ENCODE measurements at regions of chr13 and their contacts with region 1.

Region 1: GRCh38 chr13:98142380-98143156 is at the start of gene FARP1:
- DNase-seq: peak; percentile 62
- ATAC-seq: peak; percentile 89
- H3K4me3 ChIP-seq: peak within 1 kb of the TSS; percentile 82 to 98 (median 92)
- H3K27ac ChIP-seq: peak within 1 kb of the TSS; percentile 88
- H3K4me1 ChIP-seq: peaks cover 36% of the 10 kb centered on the region
- H3K27me3 ChIP-seq: no peaks in the 10 kb centered on the region; a peak in 1 of 5 replicates
- CTCF ChIP-seq: peak; percentile 44; the same call in 1 of the 2 replicates
- EP300 ChIP-seq: peak in 1 of 2 experiments; percentile 4; a peak in 1 of 4 replicates
- POLR2A ChIP-seq: peak; percentile 40 to 56; a peak in 3 of 4 replicates
- RAD21 ChIP-seq: peak; percentile 99
- total RNA-seq, gene FARP1: 70.1 and 70.6 TPM in 2 replicates

Region 2: DNA sequence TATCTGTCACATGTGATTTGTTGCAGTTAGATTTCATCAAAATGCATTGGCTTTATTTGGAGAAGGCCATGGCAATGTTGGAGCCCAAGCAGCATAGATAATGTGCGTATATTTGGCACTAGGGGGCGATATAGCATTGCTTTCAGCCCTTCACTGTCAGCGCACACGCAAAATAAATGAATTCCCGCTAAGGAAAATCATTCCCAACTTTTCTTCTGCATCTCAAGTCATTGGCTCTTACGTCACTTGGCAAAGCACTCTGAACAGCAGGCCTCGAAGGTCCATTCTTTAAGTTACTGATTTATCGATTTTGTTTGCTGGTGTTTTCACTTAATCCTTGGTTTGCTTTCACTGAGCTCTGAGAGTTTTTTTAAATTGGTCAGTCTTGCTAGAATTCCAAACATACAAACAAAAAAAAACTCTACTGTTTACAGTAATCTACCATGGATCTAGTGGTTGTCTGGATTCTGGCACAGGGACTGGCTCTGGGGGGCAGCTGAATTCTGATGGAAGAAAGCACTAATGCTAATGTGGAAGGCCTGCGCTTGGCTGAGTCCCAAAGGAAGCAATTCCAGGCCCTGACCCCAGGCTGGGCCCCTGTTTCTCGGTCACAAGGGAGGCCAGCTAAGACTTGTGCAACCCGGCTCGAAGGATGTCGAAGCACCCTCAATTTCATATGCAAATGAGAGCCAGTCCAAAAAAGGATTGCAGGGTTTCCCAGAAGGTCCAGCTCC is 286.8 kb before region 1 on chr13:
- CTCF ChIA-PET with region 1: no interaction called
- POLR2A ChIA-PET with region 1: no interaction called
- in situ Hi-C with region 1: no loop called
- intact Hi-C with region 1: loop called (anchors 10 kb)
- DNase-seq: peak; percentile 55
- ATAC-seq: peak; percentile 94
- H3K4me3 ChIP-seq: peak overlapping the region in 2 of 3 experiments; percentile 39 to 58; a peak in 3 of 6 replicates
- H3K27ac ChIP-seq: no peak overlapping the region
- H3K4me1 ChIP-seq: peaks cover 22% of the 10 kb centered on the region
- H3K27me3 ChIP-seq: peaks cover 0 to 24% of the 10 kb centered on the region in 2 experiments; a peak in 3 of 5 replicates
- CTCF ChIP-seq: peak; percentile 88
- EP300 ChIP-seq: no peak
- POLR2A ChIP-seq: no peak
- RAD21 ChIP-seq: peak; percentile 83

Region 3: GRCh38 chr13:98173431-98174152 is 31.0 kb after region 1 on chr13:
- CTCF ChIA-PET with region 1: no interaction called
- POLR2A ChIA-PET with region 1: interaction called, 5 read pairs
- in situ Hi-C with region 1: no loop called
- intact Hi-C with region 1: loop called (anchors 1 kb)
- DNase-seq: peak; percentile 95
- ATAC-seq: peak; percentile 91
- H3K4me3 ChIP-seq: no peak overlapping the region; a peak in 1 of 6 replicates
- H3K27ac ChIP-seq: peak overlapping the region; percentile 63
- H3K4me1 ChIP-seq: peaks cover 64% of the 10 kb centered on the region
- H3K27me3 ChIP-seq: no peaks in the 10 kb centered on the region
- CTCF ChIP-seq: no peak
- EP300 ChIP-seq: peak in 1 of 2 experiments; percentile 79; a peak in 2 of 4 replicates
- POLR2A ChIP-seq: no peak
- RAD21 ChIP-seq: no peak

Region 4: DNA sequence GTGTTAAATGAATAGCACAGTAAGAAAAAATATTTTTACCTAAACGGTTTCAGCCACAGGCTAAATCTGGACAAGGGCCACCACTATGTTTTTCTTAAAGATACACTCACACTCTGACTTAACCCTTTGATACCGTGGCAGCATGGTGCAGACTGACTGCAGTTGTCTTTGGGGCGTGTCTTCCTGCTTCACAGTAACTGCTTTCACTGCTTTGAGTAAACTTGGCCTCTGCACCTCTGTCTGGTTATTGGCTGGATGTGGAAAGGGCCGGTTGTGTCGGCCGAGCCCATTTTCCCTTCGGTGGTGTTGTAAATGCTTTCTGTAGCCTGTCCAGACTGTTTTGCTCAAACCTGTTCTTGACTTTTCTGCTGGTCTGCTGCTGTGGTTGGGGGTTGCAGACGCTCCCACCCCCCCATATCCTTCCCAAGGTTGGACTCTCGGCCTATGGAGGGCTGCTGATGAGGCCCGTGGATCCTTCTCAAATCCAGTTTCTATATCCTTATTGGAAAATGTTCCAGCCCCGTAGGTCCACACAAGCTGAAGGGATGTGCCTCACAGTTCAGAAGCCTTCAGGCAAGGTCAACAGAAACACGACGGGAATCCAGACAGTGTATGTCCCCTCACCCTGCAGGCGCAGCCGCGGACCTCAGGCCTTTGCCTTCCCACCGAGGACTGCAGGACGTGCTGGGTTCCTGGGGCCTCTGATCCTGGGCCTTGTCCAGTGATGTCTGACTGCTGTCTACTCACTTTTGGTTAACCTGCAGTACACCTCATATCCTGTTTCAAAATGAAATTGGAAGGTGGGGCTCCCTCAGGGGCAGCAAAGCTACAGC is 124.7 kb after region 1 on chr13:
- CTCF ChIA-PET with region 1: no interaction called
- POLR2A ChIA-PET with region 1: interaction called, 7 read pairs
- in situ Hi-C with region 1: loop called (anchors 10 kb)
- intact Hi-C with region 1: loop called (anchors 2 kb)
- DNase-seq: peak; percentile 94
- ATAC-seq: peak; percentile 76
- H3K4me3 ChIP-seq: peak overlapping the region; percentile 35 to 65 (median 41)
- H3K27ac ChIP-seq: peak overlapping the region; percentile 80
- H3K4me1 ChIP-seq: peaks cover 98% of the 10 kb centered on the region
- H3K27me3 ChIP-seq: no peaks in the 10 kb centered on the region
- CTCF ChIP-seq: no peak; the same call in 1 of the 2 replicates
- EP300 ChIP-seq: peak in 1 of 2 experiments; percentile 81; a peak in 2 of 4 replicates
- POLR2A ChIP-seq: peak; percentile 66 to 68
- RAD21 ChIP-seq: no peak

Region 5: DNA sequence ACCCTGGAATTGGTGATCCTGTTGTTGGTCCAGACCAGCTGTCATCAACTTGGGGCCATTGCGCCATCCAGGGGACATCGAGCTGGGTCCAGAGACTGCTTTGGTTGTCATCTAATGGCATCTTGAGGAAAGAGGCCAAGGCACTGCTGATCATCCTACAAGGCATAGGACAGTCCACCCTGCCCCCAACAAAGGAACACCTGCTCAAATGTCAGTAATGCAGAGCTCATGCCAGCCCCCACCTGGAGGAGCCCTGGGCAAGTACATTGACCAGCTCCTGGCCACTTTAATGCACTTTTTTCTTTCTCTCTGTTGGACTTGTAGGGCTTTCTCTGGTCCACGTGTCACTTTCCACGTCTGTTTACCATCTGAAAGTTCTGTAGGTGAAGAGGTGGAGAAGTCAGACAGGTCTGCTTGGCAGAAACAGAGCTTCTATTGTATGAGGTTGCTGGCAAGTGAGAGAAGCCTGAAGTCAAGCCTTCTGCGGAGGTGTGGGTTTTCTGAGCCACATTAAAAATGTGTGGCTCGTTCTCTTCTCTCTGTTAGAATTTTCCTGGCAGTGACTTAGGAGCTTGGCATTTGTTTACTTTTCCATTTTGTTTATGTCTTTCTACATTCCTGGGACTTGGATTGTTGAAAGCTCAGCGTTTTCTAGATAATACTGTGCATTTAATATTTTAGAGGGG is 158.5 kb after region 1 on chr13:
- CTCF ChIA-PET with region 1: no interaction called
- POLR2A ChIA-PET with region 1: interaction called, 5 read pairs
- in situ Hi-C with region 1: no loop called
- intact Hi-C with region 1: loop called (anchors 1 kb)
- DNase-seq: peak; percentile 96
- ATAC-seq: peak; percentile 90
- H3K4me3 ChIP-seq: peak overlapping the region in 1 of 3 experiments; percentile 30; a peak in 1 of 6 replicates
- H3K27ac ChIP-seq: peak overlapping the region; percentile 80
- H3K4me1 ChIP-seq: peaks cover 97% of the 10 kb centered on the region
- H3K27me3 ChIP-seq: no peaks in the 10 kb centered on the region
- CTCF ChIP-seq: peak; percentile 66
- EP300 ChIP-seq: peak in 1 of 2 experiments; percentile 52; a peak in 2 of 4 replicates
- POLR2A ChIP-seq: no peak
- RAD21 ChIP-seq: no peak

Region 6: GRCh38 chr13:98405107-98405571 is 262.6 kb after region 1 on chr13:
- CTCF ChIA-PET with region 1: no interaction called
- POLR2A ChIA-PET with region 1: no interaction called
- in situ Hi-C with region 1: no loop called
- intact Hi-C with region 1: loop called (anchors 10 kb)
- DNase-seq: no peak
- ATAC-seq: no peak
- H3K4me3 ChIP-seq: no peak overlapping the region
- H3K27ac ChIP-seq: no peak overlapping the region
- H3K4me1 ChIP-seq: peaks cover 38% of the 10 kb centered on the region
- H3K27me3 ChIP-seq: no peaks in the 10 kb centered on the region
- CTCF ChIP-seq: peak; percentile 25; the same call in 1 of the 2 replicates
- EP300 ChIP-seq: no peak
- POLR2A ChIP-seq: no peak
- RAD21 ChIP-seq: no peak